ENCODE measurements at regions of chr17 and their contacts with region 1.

Region 1: GRCh38 chr17:76182016-76182764 is 41.1 kb upstream of the FOXJ1 start:
- DNase-seq: peak; percentile 82 to 87 (median 84)
- ATAC-seq: peak in 3 of 4 donors; percentile 83 to 94 (median 89)
- H3K4me3 ChIP-seq: no peak overlapping the region
- H3K27ac ChIP-seq: no peak overlapping the region
- H3K4me1 ChIP-seq: peaks cover 0 to 13% (median 4%) of the 10 kb centered on the region in 12 donors
- H3K27me3 ChIP-seq: no peaks in the 10 kb centered on the region
- CTCF ChIP-seq: peak; percentile 78 to 92 (median 88)
- POLR2A ChIP-seq: no peak

Region 2: DNA sequence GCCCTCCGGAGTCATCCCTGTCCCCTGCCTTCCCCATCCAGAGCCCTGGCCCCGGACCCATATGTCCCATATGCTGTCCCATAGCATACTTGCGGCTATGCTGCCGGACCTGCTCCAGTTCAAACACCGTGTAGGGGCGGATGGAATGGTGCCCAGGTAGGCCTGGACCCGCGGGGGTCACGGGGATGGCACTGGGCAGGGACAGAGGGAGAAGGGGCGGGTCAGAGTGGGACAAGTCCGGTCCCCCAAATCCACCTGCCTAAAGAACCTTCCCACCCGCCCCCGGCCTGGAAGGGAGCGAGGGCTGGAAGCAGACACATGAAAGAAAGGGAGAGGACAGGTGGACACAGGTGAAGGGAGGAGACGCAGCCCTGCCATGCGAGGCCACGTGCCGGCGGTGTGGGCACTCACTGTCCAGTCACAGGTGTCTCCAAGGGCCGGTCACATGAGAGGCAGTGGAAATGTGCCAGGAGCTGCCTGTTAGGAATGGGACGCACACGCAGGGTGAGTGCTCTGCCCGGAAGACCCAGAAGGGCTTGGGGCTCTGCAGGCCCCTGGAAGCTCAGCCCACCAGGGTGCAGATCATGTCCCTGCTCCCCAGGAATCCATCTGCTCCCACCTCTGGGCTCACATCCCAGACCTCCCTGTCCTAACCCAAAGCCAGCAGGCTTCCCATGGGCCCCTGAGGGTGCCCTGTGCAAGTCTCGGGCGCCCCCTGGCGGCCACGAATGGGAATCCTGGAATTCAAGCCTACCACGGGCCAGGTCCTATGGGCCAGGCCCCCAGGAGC is 97.0 kb after region 1 on chr17:
- intact Hi-C with region 1: loop called in 5 of 10 experiments (anchors 1 to 10 kb)
- DNase-seq: peak; percentile 81 to 94 (median 85)
- ATAC-seq: peak; percentile 81 to 93 (median 87)
- H3K4me3 ChIP-seq: peak overlapping the region in 1 of 12 donors; percentile 2
- H3K27ac ChIP-seq: no peak overlapping the region
- H3K4me1 ChIP-seq: peaks cover 0 to 20% (median 5%) of the 10 kb centered on the region in 12 donors
- H3K27me3 ChIP-seq: no peaks in the 10 kb centered on the region
- CTCF ChIP-seq: peak; percentile 95 to 100 (median 99)
- POLR2A ChIP-seq: no peak